CD4-positive, alpha-beta T cell (primary cell): ENCODE measurements at regions of chr10 and their contacts with region 1.

Region 1: DNA sequence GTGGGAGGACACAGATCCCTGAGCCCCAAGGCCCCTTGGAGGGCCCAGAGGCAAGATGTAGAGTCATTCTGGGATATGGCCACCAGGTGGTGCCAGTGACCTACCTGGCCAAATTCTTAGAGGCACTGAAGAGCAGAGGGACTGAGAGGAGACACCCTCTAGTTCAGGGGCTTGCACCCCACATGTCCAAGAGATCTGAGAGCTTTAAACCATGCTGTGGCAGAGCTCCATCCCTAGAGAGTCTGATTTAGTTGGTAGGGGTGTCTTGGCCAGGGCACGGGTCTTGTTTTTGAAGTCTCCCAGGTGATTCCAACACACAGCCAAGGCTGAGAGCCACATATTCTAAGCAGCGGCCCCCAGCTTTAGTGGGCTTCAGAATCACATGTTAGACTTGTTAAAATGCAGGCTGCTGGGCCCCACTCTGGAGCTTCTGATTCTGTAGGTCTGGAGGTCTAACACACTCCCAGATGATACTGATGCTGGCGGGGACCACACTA is 52.5 kb downstream of the PRF1 start:
- DNase-seq: peak; percentile 52 to 83 (median 68)
- ATAC-seq: peak; percentile 87
- H3K4me3 ChIP-seq: no peak overlapping the region
- H3K4me3 Mint-ChIP-seq: no peak overlapping the region
- H3K27ac ChIP-seq: no peak overlapping the region
- H3K27ac Mint-ChIP-seq: no peak overlapping the region
- H3K4me1 ChIP-seq: no peaks in the 10 kb centered on the region
- H3K4me1 Mint-ChIP-seq: no peaks in the 10 kb centered on the region
- H3K27me3 ChIP-seq: no peaks in the 10 kb centered on the region
- H3K27me3 Mint-ChIP-seq: no peaks in the 10 kb centered on the region
- CTCF ChIP-seq: peak; percentile 83

Region 2: DNA sequence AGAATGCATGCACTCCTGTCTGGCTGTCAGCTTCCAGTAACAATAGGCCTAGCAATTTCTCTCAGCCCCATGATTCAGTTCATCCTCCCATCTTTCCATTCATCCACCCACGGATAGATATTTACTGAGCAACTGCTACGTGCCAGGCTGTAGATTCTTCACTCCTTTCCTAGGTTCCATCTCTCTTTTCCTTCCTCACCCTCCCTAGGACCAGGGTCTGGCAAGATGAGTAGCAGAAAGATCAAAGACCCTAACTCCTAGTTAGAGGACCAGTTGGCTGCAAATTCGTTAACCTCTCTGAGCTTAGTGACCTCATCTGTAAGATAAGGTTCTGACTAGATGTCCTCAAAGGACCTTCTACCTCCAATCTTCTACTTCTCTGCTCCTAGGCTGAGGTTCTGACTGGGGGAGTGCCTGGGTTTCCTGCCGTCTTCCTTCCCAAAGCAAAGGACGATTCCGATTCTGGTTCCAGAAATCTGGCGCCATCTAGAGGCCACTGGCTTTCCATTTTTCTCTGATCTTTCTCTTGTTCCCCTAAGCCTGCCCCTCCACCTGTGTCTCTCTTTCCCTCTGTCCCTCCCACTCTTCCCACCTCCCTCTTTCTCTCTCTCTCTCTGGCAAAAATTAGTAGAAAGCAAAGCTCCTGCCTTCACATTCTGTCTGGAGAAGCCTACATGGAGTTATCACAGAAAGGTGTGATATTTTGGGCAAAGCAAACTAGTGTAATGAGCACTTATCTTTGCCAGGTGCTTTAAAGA is 208.9 kb after region 1 on chr10:
- CTCF ChIA-PET with region 1: interaction called, 10 read pairs
- POLR2A ChIA-PET with region 1: no interaction called
- intact Hi-C with region 1: loop called (anchors 1 kb)
- DNase-seq: peak; percentile 34 to 81 (median 55)
- ATAC-seq: peak; percentile 54
- H3K4me3 ChIP-seq: no peak overlapping the region
- H3K4me3 Mint-ChIP-seq: no peak overlapping the region
- H3K27ac ChIP-seq: no peak overlapping the region
- H3K27ac Mint-ChIP-seq: no peak overlapping the region
- H3K4me1 ChIP-seq: peaks cover 5% of the 10 kb centered on the region
- H3K4me1 Mint-ChIP-seq: no peaks in the 10 kb centered on the region
- H3K27me3 ChIP-seq: no peaks in the 10 kb centered on the region
- H3K27me3 Mint-ChIP-seq: no peaks in the 10 kb centered on the region
- CTCF ChIP-seq: peak; percentile 79

Region 3: DNA sequence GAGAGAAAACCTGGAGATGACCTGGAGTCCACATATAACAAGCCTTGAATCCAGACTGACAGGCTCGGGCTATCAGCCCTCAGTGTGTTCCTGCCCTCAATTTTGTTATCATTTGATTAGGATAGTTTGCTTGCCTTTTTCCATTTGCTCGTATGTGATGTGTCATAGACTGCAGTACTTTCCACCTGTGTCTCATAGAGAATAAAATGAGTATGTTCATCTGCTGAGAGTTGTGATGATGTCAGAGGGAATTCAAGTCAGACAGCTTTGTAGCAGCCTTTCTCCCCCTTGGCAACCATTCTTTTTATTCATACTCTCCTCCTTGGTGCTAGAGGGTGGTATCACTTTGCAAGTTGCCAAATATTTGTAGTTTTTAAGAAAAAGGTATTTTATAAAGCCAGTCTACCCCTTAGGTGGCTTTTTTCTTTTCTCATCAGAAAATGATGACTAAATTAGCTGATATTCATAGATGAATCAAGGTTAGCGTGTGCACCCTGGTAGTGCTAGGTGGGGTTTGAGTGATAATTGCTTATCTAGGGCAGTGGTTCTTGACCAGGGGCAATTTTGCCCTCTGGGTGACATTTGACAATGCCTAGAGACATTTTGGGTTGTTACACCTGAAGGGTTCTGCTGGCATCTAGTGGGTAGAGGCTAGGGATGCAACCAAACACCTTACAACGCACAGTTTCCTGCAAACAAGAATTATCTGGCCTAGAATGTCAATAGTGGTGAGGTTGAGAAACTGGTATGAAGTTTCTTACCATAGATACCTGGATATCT is 271.2 kb after region 1 on chr10:
- CTCF ChIA-PET with region 1: no interaction called
- POLR2A ChIA-PET with region 1: no interaction called
- intact Hi-C with region 1: loop called in 1 of 2 experiments (anchors 1 kb)
- DNase-seq: peak in 3 of 14 experiments; percentile 10 to 29 (median 15)
- ATAC-seq: peak; percentile 49
- H3K4me3 ChIP-seq: no peak overlapping the region
- H3K4me3 Mint-ChIP-seq: no peak overlapping the region
- H3K27ac ChIP-seq: no peak overlapping the region
- H3K27ac Mint-ChIP-seq: no peak overlapping the region
- H3K4me1 ChIP-seq: peaks cover 12% of the 10 kb centered on the region
- H3K4me1 Mint-ChIP-seq: peaks cover 47% of the 10 kb centered on the region
- H3K27me3 ChIP-seq: no peaks in the 10 kb centered on the region
- H3K27me3 Mint-ChIP-seq: no peaks in the 10 kb centered on the region
- CTCF ChIP-seq: no peak

Region 4: GRCh38 chr10:71209352-71209715 is 659.3 kb after region 1 on chr10:
- CTCF ChIA-PET with region 1: no interaction called
- POLR2A ChIA-PET with region 1: no interaction called
- intact Hi-C with region 1: loop called in 1 of 2 experiments (anchors 2 kb)
- DNase-seq: no peak
- ATAC-seq: no peak
- H3K4me3 ChIP-seq: no peak overlapping the region
- H3K4me3 Mint-ChIP-seq: no peak overlapping the region
- H3K27ac ChIP-seq: no peak overlapping the region
- H3K27ac Mint-ChIP-seq: no peak overlapping the region
- H3K4me1 ChIP-seq: peaks cover 18% of the 10 kb centered on the region
- H3K4me1 Mint-ChIP-seq: peaks cover 4% of the 10 kb centered on the region
- H3K27me3 ChIP-seq: peaks cover 49 to 52% of the 10 kb centered on the region in 2 experiments
- H3K27me3 Mint-ChIP-seq: peaks cover 78% of the 10 kb centered on the region
- CTCF ChIP-seq: no peak